HepG2 (cell line): ENCODE measurements at regions of chr12 and their contacts with region 1.

Region 1: GRCh38 chr12:98503592-98504367 is 11.6 kb upstream of the TMPO start:
- DNase-seq: peak; percentile 84
- ATAC-seq: peak; percentile 58
- H3K4me3 ChIP-seq: peak overlapping the region; percentile 72 to 77 (median 77)
- H3K27ac ChIP-seq: peak overlapping the region; percentile 99
- H3K4me1 ChIP-seq: peaks cover 39% of the 10 kb centered on the region
- H3K27me3 ChIP-seq: no peaks in the 10 kb centered on the region; a peak in 1 of 5 replicates
- CTCF ChIP-seq: peak; percentile 38
- EP300 ChIP-seq: peak in 1 of 2 experiments; percentile 25; a peak in 3 of 4 replicates
- POLR2A ChIP-seq: peak; percentile 65 to 74
- RAD21 ChIP-seq: peak; percentile 4; the same call in 1 of the 2 replicates

Region 2: DNA sequence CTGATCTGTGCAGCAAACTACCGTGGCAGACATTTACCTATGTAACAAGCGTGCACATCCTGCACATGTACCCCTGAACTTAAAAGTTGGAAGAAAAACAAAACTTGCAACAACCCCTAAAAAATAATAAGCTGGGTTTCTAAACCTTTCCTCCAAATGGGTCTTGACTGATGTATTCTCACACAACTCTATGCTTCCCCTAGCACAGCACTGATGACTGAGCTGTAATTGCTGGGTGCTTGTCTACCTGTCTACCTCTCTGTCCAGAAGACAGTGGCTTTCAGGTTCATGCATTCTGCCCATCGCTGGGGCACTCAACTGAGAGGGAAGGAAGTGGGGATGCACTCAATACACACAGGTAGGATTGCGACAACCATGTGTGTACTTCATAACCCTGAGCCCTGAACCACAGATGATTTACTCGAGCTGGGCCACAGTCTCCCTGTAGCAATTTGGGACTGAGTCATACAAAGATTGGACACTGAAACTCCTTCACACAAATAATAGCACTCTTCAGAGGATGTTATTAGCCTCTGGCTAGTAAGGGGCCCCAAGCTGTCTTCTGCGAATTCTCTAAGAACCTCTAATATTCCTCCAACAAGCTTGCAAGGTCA is 33.2 kb before region 1 on chr12:
- CTCF ChIA-PET with region 1: no interaction called
- POLR2A ChIA-PET with region 1: no interaction called
- in situ Hi-C with region 1: no loop called
- intact Hi-C with region 1: no loop called
- DNase-seq: no peak
- ATAC-seq: peak; percentile 61
- H3K4me3 ChIP-seq: no peak overlapping the region
- H3K27ac ChIP-seq: no peak overlapping the region
- H3K4me1 ChIP-seq: no peaks in the 10 kb centered on the region
- H3K27me3 ChIP-seq: no peaks in the 10 kb centered on the region; a peak in 2 of 5 replicates
- CTCF ChIP-seq: no peak
- EP300 ChIP-seq: no peak
- POLR2A ChIP-seq: no peak
- RAD21 ChIP-seq: no peak

Region 3: DNA sequence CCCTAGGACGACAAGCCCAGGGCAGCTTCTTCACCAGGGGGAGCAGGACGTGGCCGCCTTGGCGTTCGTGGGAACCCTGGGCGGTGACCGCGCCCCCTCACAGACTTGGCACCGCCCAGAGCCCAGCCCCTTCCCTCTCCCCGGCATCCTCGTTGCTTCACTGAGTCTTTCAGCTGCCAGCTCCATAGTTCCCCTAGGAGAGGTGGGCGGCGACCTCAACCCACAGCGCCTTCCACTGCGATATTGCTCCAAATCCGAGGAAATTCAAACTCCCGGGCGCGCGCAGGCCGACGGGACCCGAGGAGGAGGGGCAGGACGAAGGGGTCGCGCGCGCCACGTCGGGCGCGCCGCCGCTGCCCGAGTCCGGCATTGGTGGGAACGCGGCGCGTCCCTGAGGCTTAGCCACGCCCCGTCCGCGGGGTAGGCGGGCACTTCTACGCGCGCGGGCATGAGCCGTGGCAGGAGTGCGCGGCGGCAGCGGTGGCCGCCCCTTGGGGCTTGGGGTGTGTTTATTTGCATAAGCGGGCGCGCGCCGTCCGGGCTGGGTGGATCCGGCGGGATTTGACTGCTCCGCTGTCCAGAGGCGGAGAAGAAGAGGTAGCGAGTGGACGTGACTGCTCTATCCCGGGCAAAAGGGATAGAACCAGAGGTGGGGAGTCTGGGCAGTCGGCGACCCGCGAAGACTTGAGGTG is 141.1 kb after region 1 on chr12 and contains the starts of genes APAF1 and IKBIP:
- CTCF ChIA-PET with region 1: no interaction called
- POLR2A ChIA-PET with region 1: no interaction called
- in situ Hi-C with region 1: no loop called
- intact Hi-C with region 1: loop called (anchors 2 kb)
- DNase-seq: peak; percentile 89
- ATAC-seq: peak; percentile 92
- H3K4me3 ChIP-seq: peak within 1 kb of the TSS; percentile 88 to 99 (median 95)
- H3K27ac ChIP-seq: peak within 1 kb of the TSS; percentile 84
- H3K4me1 ChIP-seq: peaks cover 40% of the 10 kb centered on the region
- H3K27me3 ChIP-seq: no peaks in the 10 kb centered on the region; a peak in 1 of 5 replicates
- CTCF ChIP-seq: peak; percentile 12; the same call in 1 of the 2 replicates
- EP300 ChIP-seq: no peak
- POLR2A ChIP-seq: peak; percentile 70 to 83; a peak in 3 of 4 replicates
- RAD21 ChIP-seq: no peak
- total RNA-seq, gene APAF1: 13.0 and 17.9 TPM in 2 replicates
- total RNA-seq, gene IKBIP: 50.4 and 55.5 TPM in 2 replicates